Activated CD8-positive, alpha-beta T cell treated with anti-CD3 and anti-CD28 coated beads, Interleukin-2, amount 10 ng/mL, durations not matched to agents 7 days and 5 days (primary cell): ENCODE measurements at regions of chr5 and their contacts with region 1.

Region 1: DNA sequence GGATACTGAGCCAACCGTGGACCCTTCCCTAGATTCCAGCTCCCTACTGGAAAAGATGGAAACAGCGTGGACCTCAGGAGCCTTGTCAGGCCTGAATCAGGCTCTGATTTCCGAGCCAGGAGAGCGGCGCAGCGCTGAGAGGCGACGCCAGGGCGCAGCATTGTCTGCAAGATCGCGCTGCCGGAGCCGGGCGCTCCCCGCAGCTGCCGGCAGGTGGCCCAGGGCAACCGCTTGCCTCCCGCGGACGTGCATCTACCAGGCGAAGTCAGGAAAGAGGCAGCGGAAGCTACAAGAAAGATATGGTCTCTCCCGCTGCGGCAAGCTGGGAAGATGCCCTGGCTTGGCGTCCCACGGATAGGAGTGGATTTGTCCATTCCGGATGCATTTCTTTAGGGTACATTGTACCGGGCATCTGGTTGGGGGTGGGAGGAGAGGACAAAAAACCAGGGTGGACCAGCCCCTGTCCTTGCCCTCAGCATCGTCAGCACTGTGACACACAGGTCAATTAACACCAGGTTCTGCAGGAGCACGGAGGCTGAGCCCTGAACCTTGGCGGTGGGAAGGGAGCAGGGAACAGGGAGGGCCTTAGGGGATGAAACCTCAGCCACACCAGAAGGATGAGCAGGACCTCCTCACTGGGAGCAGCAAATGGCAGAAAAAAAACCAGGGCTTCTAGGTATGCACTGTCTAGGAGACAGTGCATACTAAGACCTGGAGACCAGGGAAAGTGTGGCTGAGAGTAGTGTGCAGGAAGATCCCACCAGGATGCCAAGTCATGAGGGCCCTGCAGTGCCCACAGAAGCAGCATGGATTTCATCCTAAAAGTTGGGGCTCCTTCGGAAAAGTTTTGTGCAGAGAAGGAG is 55.9 kb downstream of the SFXN1 start:
- DNase-seq: peak; percentile 89
- ATAC-seq: peak; percentile 99
- H3K4me3 Mint-ChIP-seq: peak overlapping the region; percentile 9
- H3K27ac Mint-ChIP-seq: no peak overlapping the region
- H3K4me1 Mint-ChIP-seq: peaks cover 52% of the 10 kb centered on the region
- H3K27me3 Mint-ChIP-seq: no peaks in the 10 kb centered on the region

Region 2: DNA sequence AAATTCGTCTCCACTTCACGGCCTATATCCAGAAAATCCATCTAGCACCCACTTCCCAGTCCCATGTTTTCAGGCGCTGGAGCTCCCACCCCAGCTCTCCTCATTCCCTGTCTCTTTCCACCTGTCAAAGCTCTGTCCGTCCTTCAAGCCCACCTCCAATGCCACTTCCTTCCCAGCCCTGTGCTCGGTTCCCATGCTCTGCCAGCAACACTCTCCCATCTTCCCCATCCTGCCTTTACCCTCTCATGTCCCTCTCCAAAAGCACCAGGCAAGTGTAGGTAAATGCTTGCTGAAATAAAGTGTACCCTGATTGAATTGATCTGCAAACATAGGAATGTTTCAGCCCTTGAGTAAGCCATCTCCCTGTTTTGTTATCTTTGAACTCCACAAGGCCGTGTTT is 99.5 kb before region 1 on chr5:
- CTCF ChIA-PET with region 1: no interaction called
- POLR2A ChIA-PET with region 1: no interaction called
- DNase-seq: no peak
- ATAC-seq: no peak
- H3K4me3 Mint-ChIP-seq: no peak overlapping the region
- H3K27ac Mint-ChIP-seq: no peak overlapping the region
- H3K4me1 Mint-ChIP-seq: no peaks in the 10 kb centered on the region
- H3K27me3 Mint-ChIP-seq: peaks cover 28% of the 10 kb centered on the region

Region 3: DNA sequence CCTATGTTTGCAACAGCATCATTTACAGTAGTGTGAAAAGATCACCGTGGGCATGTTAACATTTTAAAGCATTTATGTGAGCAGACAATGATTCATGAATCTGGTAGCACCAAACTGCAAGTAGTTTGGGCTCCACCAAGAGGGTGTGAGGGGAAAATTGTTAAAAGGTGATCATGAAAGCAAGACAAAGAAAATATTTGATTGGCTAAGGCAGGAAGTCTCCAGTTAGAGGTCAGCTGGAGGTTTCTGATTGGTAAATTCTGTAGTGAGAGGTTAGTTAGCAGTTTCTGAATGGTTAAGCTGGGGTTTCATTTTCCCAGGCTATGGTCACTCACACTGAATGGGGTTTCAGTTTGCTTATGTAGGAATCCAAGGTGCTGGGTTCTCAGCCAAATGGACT is 76.8 kb before region 1 on chr5:
- CTCF ChIA-PET with region 1: no interaction called
- POLR2A ChIA-PET with region 1: no interaction called
- DNase-seq: no peak
- ATAC-seq: no peak
- H3K4me3 Mint-ChIP-seq: no peak overlapping the region
- H3K27ac Mint-ChIP-seq: no peak overlapping the region
- H3K4me1 Mint-ChIP-seq: peaks cover 14% of the 10 kb centered on the region
- H3K27me3 Mint-ChIP-seq: peaks cover 22% of the 10 kb centered on the region

Region 4: GRCh38 chr5:175517818-175518450 is 16.4 kb before region 1 on chr5:
- CTCF ChIA-PET with region 1: interaction called, 70 read pairs
- POLR2A ChIA-PET with region 1: interaction called, 3 read pairs
- DNase-seq: peak; percentile 71
- ATAC-seq: peak; percentile 51
- H3K4me3 Mint-ChIP-seq: peak overlapping the region; percentile 8
- H3K27ac Mint-ChIP-seq: peak overlapping the region; percentile 88
- H3K4me1 Mint-ChIP-seq: peaks cover 89% of the 10 kb centered on the region
- H3K27me3 Mint-ChIP-seq: no peaks in the 10 kb centered on the region

Region 5: DNA sequence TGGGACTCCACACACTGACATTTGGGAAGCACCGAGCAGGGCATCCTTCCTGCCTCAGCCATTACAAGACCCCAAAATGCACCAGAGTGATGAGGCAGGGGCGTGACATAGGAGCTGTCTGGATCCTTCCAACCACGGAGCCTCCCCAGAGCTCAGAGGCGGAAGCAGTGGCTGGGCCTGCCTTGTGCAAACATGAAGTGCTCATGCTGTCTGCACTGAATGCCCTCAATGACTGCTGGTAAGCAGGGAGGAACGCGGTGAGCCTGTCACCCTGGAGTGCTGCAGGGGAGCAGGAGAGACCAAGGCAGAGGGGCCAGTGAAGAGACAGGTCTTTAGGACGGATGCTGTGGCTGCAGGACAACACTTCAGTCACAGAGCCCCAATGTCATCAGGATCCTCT is 63.4 kb after region 1 on chr5:
- CTCF ChIA-PET with region 1: no interaction called
- POLR2A ChIA-PET with region 1: no interaction called
- DNase-seq: no peak
- ATAC-seq: no peak
- H3K4me3 Mint-ChIP-seq: no peak overlapping the region
- H3K27ac Mint-ChIP-seq: no peak overlapping the region
- H3K4me1 Mint-ChIP-seq: no peaks in the 10 kb centered on the region
- H3K27me3 Mint-ChIP-seq: peaks cover 12% of the 10 kb centered on the region

Region 6: GRCh38 chr5:175657593-175658271 is 123.4 kb after region 1 on chr5 and contains the start of gene HRH2:
- CTCF ChIA-PET with region 1: interaction called, 28 read pairs
- POLR2A ChIA-PET with region 1: interaction called, 3 read pairs
- DNase-seq: peak; percentile 78
- ATAC-seq: peak; percentile 54
- H3K4me3 Mint-ChIP-seq: peak within 1 kb of the TSS; percentile 94
- H3K27ac Mint-ChIP-seq: peak within 1 kb of the TSS; percentile 90
- H3K4me1 Mint-ChIP-seq: peaks cover 90% of the 10 kb centered on the region
- H3K27me3 Mint-ChIP-seq: no peaks in the 10 kb centered on the region
- total RNA-seq, gene HRH2: 26.9 to 27.5 TPM

Region 7: GRCh38 chr5:175689147-175689991 is 155.1 kb after region 1 on chr5:
- CTCF ChIA-PET with region 1: interaction called, 36 read pairs
- POLR2A ChIA-PET with region 1: interaction called, 3 read pairs
- DNase-seq: no peak
- ATAC-seq: no peak
- H3K4me3 Mint-ChIP-seq: no peak overlapping the region
- H3K27ac Mint-ChIP-seq: peak overlapping the region; percentile 22
- H3K4me1 Mint-ChIP-seq: peaks cover 52% of the 10 kb centered on the region
- H3K27me3 Mint-ChIP-seq: no peaks in the 10 kb centered on the region

Region 8: GRCh38 chr5:175718401-175719108 is 184.3 kb after region 1 on chr5:
- CTCF ChIA-PET with region 1: interaction called, 86 read pairs
- POLR2A ChIA-PET with region 1: no interaction called
- DNase-seq: peak; percentile 69
- ATAC-seq: no peak
- H3K4me3 Mint-ChIP-seq: no peak overlapping the region
- H3K27ac Mint-ChIP-seq: no peak overlapping the region
- H3K4me1 Mint-ChIP-seq: peaks cover 3% of the 10 kb centered on the region
- H3K27me3 Mint-ChIP-seq: peaks cover 2% of the 10 kb centered on the region